ENCODE measurements at regions of chr2 and their contacts with region 1.

Region 1: GRCh38 chr2:232315049-232315922 is 63.3 kb upstream of the ALPP start:
- DNase-seq: peak; percentile 81 to 88 (median 83)
- H3K4me3 ChIP-seq: peak overlapping the region; percentile 9 to 43
- H3K4me3 Mint-ChIP-seq: peak overlapping the region; percentile 63 to 82 (median 71)
- H3K27ac ChIP-seq: peak overlapping the region; percentile 32
- H3K27ac Mint-ChIP-seq: peak overlapping the region; percentile 87 to 96 (median 95)
- H3K4me1 ChIP-seq: peaks cover 96% of the 10 kb centered on the region
- H3K4me1 Mint-ChIP-seq: peaks cover 65 to 98% (median 83%) of the 10 kb centered on the region in 4 donors
- H3K27me3 ChIP-seq: no peaks in the 10 kb centered on the region
- H3K27me3 Mint-ChIP-seq: no peaks in the 10 kb centered on the region

Region 2: GRCh38 chr2:231961349-231962166 is 353.7 kb before region 1 on chr2 and contains the start of gene DIS3L2:
- CTCF ChIA-PET with region 1: no interaction called
- POLR2A ChIA-PET with region 1: interaction called, 16 read pairs
- intact Hi-C with region 1: loop called (anchors 2 kb)
- DNase-seq: peak; percentile 76 to 81 (median 80)
- H3K4me3 ChIP-seq: peak within 1 kb of the TSS; percentile 81 to 98
- H3K4me3 Mint-ChIP-seq: peak within 1 kb of the TSS; percentile 93 to 98 (median 96)
- H3K27ac ChIP-seq: peak within 1 kb of the TSS; percentile 51
- H3K27ac Mint-ChIP-seq: peak within 1 kb of the TSS; percentile 92 to 97 (median 93)
- H3K4me1 ChIP-seq: peaks cover 14% of the 10 kb centered on the region
- H3K4me1 Mint-ChIP-seq: peaks cover 29 to 53% (median 37%) of the 10 kb centered on the region in 4 donors
- H3K27me3 ChIP-seq: no peaks in the 10 kb centered on the region
- H3K27me3 Mint-ChIP-seq: peaks cover 0 to 5% of the 10 kb centered on the region in 2 donors
- total RNA-seq, gene DIS3L2: 56.0 to 59.7 TPM

Region 3: GRCh38 chr2:231966886-231967285 is 348.4 kb before region 1 on chr2:
- CTCF ChIA-PET with region 1: no interaction called
- POLR2A ChIA-PET with region 1: interaction called, 16 read pairs
- intact Hi-C with region 1: loop called (anchors 2 kb)
- DNase-seq: no peak
- H3K4me3 ChIP-seq: no peak overlapping the region
- H3K4me3 Mint-ChIP-seq: peak overlapping the region in 3 of 8 donors; percentile 9 to 43 (median 40)
- H3K27ac ChIP-seq: no peak overlapping the region
- H3K27ac Mint-ChIP-seq: peak overlapping the region in 2 of 7 donors; percentile 0 to 78
- H3K4me1 ChIP-seq: peaks cover 16% of the 10 kb centered on the region
- H3K4me1 Mint-ChIP-seq: peaks cover 37 to 55% (median 44%) of the 10 kb centered on the region in 4 donors
- H3K27me3 ChIP-seq: no peaks in the 10 kb centered on the region
- H3K27me3 Mint-ChIP-seq: no peaks in the 10 kb centered on the region

Region 4: GRCh38 chr2:232133078-232133477 is 182.2 kb before region 1 on chr2:
- CTCF ChIA-PET with region 1: no interaction called
- POLR2A ChIA-PET with region 1: no interaction called
- intact Hi-C with region 1: loop called (anchors 10 kb)
- DNase-seq: no peak
- H3K4me3 ChIP-seq: no peak overlapping the region
- H3K4me3 Mint-ChIP-seq: no peak overlapping the region
- H3K27ac ChIP-seq: no peak overlapping the region
- H3K27ac Mint-ChIP-seq: peak overlapping the region in 1 of 7 donors; percentile 27
- H3K4me1 ChIP-seq: no peaks in the 10 kb centered on the region
- H3K4me1 Mint-ChIP-seq: peaks cover 6 to 10% (median 7%) of the 10 kb centered on the region in 4 donors
- H3K27me3 ChIP-seq: no peaks in the 10 kb centered on the region
- H3K27me3 Mint-ChIP-seq: no peaks in the 10 kb centered on the region

Region 5: DNA sequence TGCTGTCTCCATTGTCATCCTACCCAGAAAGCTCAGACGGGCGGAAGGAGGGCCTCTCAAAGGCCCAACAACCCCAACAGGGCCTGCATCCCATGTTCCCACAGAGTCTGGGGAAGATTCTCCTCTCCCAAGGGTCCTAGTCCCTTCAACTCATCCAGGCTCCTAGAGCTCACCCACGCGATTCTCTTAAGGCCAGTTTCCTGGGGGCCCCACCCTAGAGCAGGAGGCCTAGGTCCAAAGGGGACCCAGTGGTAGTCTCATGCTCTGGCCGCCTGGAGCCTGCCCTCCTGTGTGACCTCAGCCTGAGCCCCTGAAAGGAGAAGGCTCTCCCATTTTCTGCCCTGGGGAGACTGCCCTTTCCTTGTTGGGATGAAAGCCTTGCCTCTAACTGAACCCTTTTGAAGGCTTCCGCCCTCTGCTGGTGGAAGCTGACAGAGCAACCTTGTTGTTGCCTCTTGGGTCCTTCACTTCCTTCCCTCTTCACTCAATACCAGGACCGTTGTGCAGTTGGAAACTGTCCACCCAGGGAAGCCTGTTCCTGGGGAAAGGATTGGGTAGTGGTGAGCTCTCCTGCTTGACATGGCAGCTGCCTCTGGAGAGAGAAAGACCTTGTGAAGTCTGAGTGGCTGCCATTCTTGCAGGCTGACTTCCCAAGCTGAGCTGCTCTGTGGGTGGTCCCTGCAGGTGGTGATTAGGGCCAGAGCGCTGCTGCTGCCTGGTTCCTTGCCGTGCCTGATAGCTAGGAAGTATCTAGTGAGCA is 22.7 kb before region 1 on chr2:
- CTCF ChIA-PET with region 1: interaction called, 58 read pairs
- POLR2A ChIA-PET with region 1: interaction called, 7 read pairs
- intact Hi-C with region 1: no loop called
- DNase-seq: peak in 4 of 5 donors; percentile 26 to 31 (median 28)
- H3K4me3 ChIP-seq: no peak overlapping the region
- H3K4me3 Mint-ChIP-seq: no peak overlapping the region
- H3K27ac ChIP-seq: no peak overlapping the region
- H3K27ac Mint-ChIP-seq: peak overlapping the region in 4 of 7 donors; percentile 11 to 81 (median 51)
- H3K4me1 ChIP-seq: peaks cover 4% of the 10 kb centered on the region
- H3K4me1 Mint-ChIP-seq: peaks cover 0 to 14% (median 4%) of the 10 kb centered on the region in 4 donors
- H3K27me3 ChIP-seq: no peaks in the 10 kb centered on the region
- H3K27me3 Mint-ChIP-seq: no peaks in the 10 kb centered on the region

Region 6: GRCh38 chr2:232327105-232328041 is 12.1 kb after region 1 on chr2:
- CTCF ChIA-PET with region 1: interaction called, 52 read pairs
- POLR2A ChIA-PET with region 1: interaction called, 4 read pairs
- intact Hi-C with region 1: no loop called
- DNase-seq: peak; percentile 73 to 85 (median 77)
- H3K4me3 ChIP-seq: no peak overlapping the region
- H3K4me3 Mint-ChIP-seq: no peak overlapping the region
- H3K27ac ChIP-seq: no peak overlapping the region
- H3K27ac Mint-ChIP-seq: peak overlapping the region in 4 of 7 donors; percentile 41 to 77 (median 52)
- H3K4me1 ChIP-seq: peaks cover 13% of the 10 kb centered on the region
- H3K4me1 Mint-ChIP-seq: peaks cover 6 to 24% (median 10%) of the 10 kb centered on the region in 4 donors
- H3K27me3 ChIP-seq: no peaks in the 10 kb centered on the region
- H3K27me3 Mint-ChIP-seq: no peaks in the 10 kb centered on the region

Measured in CD4-positive, alpha-beta memory T cell (primary cell).